Psoas muscle (tissue), 8 donors: ENCODE measurements at regions of chr4 and their contacts with region 1.

Region 1: GRCh38 chr4:175271010-175271630 is 353.0 kb downstream of the ADAM29 start:
- DNase-seq: no peak
- ATAC-seq: no peak
- H3K4me3 ChIP-seq: no peak overlapping the region
- H3K27ac ChIP-seq: no peak overlapping the region
- H3K4me1 ChIP-seq: no peaks in the 10 kb centered on the region
- H3K27me3 ChIP-seq: no peaks in the 10 kb centered on the region
- CTCF ChIP-seq: no peak

Region 2: DNA sequence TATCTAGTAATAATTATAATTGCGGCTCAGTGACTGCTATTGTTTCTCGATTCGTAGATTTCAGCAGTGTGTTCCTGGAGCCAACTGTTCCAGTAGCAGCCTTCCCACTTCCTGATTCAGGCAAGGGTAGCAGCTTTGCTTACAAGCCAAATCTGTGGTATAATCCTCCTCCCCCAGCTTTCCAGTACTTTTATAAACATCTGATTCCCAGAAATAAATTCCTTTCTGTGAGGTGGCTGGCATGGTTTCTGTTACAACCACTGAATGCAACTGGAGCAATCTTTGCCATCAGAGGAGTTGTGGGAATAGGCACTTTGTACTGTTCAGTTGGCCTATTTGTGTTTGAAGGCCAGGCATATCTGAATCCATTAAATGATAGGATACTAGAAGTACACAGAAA is 522.0 kb before region 1 on chr4:
- intact Hi-C with region 1: loop called in 1 of 2 experiments (anchors 5 kb)
- DNase-seq: no peak
- ATAC-seq: no peak
- H3K4me3 ChIP-seq: no peak overlapping the region
- H3K27ac ChIP-seq: no peak overlapping the region
- H3K4me1 ChIP-seq: no peaks in the 10 kb centered on the region
- H3K27me3 ChIP-seq: no peaks in the 10 kb centered on the region
- CTCF ChIP-seq: no peak